ENCODE measurements at regions of chr15 and their contacts with region 1.

Region 1: DNA sequence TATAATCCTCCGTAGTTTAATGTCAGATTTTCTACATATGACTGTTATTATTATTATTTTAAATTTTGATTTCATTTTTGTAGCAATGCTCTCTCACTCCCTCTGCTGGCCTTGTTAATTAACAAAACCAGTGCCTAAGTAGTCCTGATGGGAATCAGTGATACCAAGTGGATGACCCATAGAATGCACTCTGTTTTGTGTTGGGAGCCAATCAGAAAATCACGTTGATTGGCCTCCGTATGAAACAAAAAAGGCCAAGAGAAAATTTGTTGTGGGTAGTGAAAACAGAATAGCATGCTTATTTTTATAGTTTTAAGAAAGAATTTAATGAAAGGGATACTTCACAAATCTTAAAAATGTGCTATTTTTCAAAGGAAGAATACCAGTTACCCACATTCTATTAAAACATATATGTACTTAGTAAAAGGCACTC is 34.4 kb upstream of the MEIS2 start:
- DNase-seq: no peak
- ATAC-seq: peak in 1 of 4 donors; percentile 81
- H3K4me3 ChIP-seq: no peak overlapping the region
- H3K27ac ChIP-seq: no peak overlapping the region
- H3K4me1 ChIP-seq: peaks cover 0 to 5% (median 0%) of the 10 kb centered on the region in 12 donors
- H3K27me3 ChIP-seq: no peaks in the 10 kb centered on the region
- CTCF ChIP-seq: peak; percentile 49 to 82 (median 67)
- POLR2A ChIP-seq: no peak

Region 2: GRCh38 chr15:36645106-36645505 is 489.6 kb before region 1 on chr15:
- intact Hi-C with region 1: loop called in 1 of 10 experiments (anchors 5 kb)
- DNase-seq: no peak
- ATAC-seq: no peak
- H3K4me3 ChIP-seq: no peak overlapping the region
- H3K27ac ChIP-seq: no peak overlapping the region
- H3K4me1 ChIP-seq: peaks cover 0 to 10% (median 0%) of the 10 kb centered on the region in 12 donors
- H3K27me3 ChIP-seq: no peaks in the 10 kb centered on the region
- CTCF ChIP-seq: peak in 8 of 12 donors; percentile 12 to 33 (median 18)
- POLR2A ChIP-seq: no peak

Region 3: DNA sequence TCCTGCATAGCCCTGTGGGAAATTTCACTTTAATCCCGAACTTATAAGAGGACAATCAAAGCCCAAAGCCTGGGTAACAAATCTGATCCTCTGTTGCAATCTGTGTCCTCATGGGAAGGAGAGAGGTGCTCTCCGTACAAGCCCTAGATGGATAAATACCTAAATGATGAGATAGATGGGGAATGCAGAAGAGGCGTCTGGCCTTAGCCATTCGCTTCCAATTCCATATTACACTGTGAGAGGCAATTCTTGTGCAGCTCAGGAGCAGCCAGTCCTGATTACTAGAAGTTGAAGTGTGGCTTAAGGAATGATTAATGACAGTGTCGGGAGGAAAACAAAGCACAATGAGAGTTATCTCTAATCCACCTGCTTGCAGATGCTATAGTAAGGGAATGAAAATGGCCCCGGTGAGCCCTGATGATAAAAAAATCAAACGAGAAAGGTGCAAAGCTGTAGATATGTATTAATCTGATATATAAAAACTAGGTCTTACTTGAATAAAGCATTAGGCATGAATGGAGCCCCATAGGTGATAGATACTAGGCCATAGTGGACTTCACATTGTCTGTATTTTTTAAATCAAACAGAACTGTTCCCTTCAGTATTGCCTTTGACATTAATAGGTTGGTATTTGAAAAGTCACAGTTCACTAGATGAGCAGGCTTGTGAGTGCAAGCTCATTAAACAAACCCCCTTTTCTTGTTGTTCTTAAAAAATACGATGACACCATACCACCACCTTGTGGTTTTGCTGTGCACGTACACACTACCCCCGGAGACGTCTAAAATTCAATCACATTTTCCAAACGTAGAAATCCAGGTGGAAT is 745.5 kb after region 1 on chr15:
- intact Hi-C with region 1: loop called in 2 of 10 experiments (anchors 10 kb)
- DNase-seq: no peak
- ATAC-seq: peak in 3 of 4 donors; percentile 44 to 68 (median 50)
- H3K4me3 ChIP-seq: no peak overlapping the region
- H3K27ac ChIP-seq: no peak overlapping the region
- H3K4me1 ChIP-seq: peaks cover 0 to 4% (median 0%) of the 10 kb centered on the region in 12 donors
- H3K27me3 ChIP-seq: no peaks in the 10 kb centered on the region
- CTCF ChIP-seq: peak; percentile 45 to 69 (median 58)
- POLR2A ChIP-seq: no peak